Activated naive CD4-positive, alpha-beta T cell treated with anti-CD3 and anti-CD28 coated beads for 36 hours (primary cell): ENCODE measurements at regions of chr2 and their contacts with region 1.

Region 1: DNA sequence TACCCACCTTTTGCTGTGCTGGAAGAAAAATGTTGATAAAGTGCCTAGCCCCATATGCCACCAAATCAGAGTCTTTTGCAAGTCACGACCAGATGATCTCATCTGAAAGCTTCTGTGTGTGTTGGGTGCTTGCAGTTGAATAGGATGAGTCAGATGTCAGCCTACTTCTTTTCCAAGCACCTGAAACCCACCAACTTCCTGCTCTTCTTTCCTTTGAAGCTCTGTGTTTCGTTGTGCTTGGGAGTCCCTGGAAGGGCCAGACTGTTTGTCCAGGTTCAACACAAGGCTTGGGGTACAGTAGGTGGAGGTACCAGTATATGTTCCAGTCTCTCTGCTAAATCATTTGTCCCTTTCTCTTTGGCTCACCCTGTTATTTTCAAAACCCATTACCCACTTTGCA is 36.8 kb upstream of the LCLAT1 start:
- DNase-seq: peak; percentile 58
- H3K4me3 Mint-ChIP-seq: no peak overlapping the region
- H3K27ac Mint-ChIP-seq: peak overlapping the region; percentile 73
- H3K4me1 Mint-ChIP-seq: peaks cover 45% of the 10 kb centered on the region
- H3K27me3 Mint-ChIP-seq: no peaks in the 10 kb centered on the region

Region 2: GRCh38 chr2:30273261-30273861 is 136.9 kb before region 1 on chr2:
- CTCF ChIA-PET with region 1: no interaction called
- intact Hi-C with region 1: loop called (anchors 1 kb)
- DNase-seq: peak; percentile 60
- H3K4me3 Mint-ChIP-seq: no peak overlapping the region
- H3K27ac Mint-ChIP-seq: peak overlapping the region; percentile 68
- H3K4me1 Mint-ChIP-seq: peaks cover 78% of the 10 kb centered on the region
- H3K27me3 Mint-ChIP-seq: no peaks in the 10 kb centered on the region

Region 3: GRCh38 chr2:30366199-30366691 is 44.0 kb before region 1 on chr2:
- CTCF ChIA-PET with region 1: no interaction called
- intact Hi-C with region 1: loop called (anchors 1 kb)
- DNase-seq: peak; percentile 74
- H3K4me3 Mint-ChIP-seq: no peak overlapping the region
- H3K27ac Mint-ChIP-seq: peak overlapping the region; percentile 67
- H3K4me1 Mint-ChIP-seq: peaks cover 43% of the 10 kb centered on the region
- H3K27me3 Mint-ChIP-seq: no peaks in the 10 kb centered on the region

Region 4: GRCh38 chr2:30439879-30440278 is 29.7 kb after region 1 on chr2:
- CTCF ChIA-PET with region 1: no interaction called
- intact Hi-C with region 1: loop called (anchors 1 kb)
- DNase-seq: peak; percentile 79
- H3K4me3 Mint-ChIP-seq: no peak overlapping the region
- H3K27ac Mint-ChIP-seq: peak overlapping the region; percentile 79
- H3K4me1 Mint-ChIP-seq: peaks cover 41% of the 10 kb centered on the region
- H3K27me3 Mint-ChIP-seq: no peaks in the 10 kb centered on the region